A673 (cell line): ENCODE measurements at regions of chr4 and their contacts with region 1.

Region 1: DNA sequence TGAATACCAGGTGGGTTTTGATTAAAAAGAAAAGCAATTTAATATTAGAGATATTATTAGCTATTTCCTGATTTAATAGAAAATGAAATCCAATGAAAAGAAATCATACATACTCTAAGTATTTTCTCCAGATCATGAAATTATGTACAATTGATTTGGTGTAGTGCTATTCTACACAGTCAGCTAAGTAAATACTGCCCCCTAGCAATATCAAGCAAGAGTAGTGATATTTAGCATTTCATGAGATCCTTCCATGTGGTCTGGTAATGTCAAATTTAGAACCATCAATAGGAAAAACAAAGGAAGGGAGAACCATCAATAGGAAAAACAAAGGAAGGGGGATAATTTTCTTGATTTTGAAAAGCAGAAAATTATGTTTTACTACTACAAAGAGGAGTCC is 114.6 kb downstream of the TBCK start:
- DNase-seq: peak; percentile 55
- H3K4me3 ChIP-seq: no peak overlapping the region
- H3K27ac ChIP-seq: no peak overlapping the region
- H3K4me1 ChIP-seq: peaks cover 5% of the 10 kb centered on the region
- H3K27me3 ChIP-seq: no peaks in the 10 kb centered on the region
- CTCF ChIP-seq: peak; percentile 75

Region 2: GRCh38 chr4:105894660-105895582 is 306.5 kb before region 1 on chr4 and contains the start of gene NPNT:
- CTCF ChIA-PET with region 1: no interaction called
- POLR2A ChIA-PET with region 1: no interaction called
- intact Hi-C with region 1: loop called (anchors 5 kb)
- DNase-seq: no peak
- H3K4me3 ChIP-seq: peak within 1 kb of the TSS; percentile 48
- H3K27ac ChIP-seq: no peak within 1 kb of the TSS
- H3K4me1 ChIP-seq: peaks cover 12% of the 10 kb centered on the region
- H3K27me3 ChIP-seq: peaks cover 98% of the 10 kb centered on the region
- CTCF ChIP-seq: no peak
- total RNA-seq, gene NPNT: 0.45 and 0.50 TPM in 2 replicates